ENCODE measurements at regions of chr15 and their contacts with region 1.

Region 1: GRCh38 chr15:89017370-89018066 is 70.7 kb upstream of the ABHD2 start:
- DNase-seq: peak; percentile 60 to 86 (median 64)
- ATAC-seq: peak; percentile 83
- H3K4me3 ChIP-seq: peak overlapping the region in 1 of 2 donors; percentile 12
- H3K27ac ChIP-seq: no peak overlapping the region
- H3K4me1 ChIP-seq: peaks cover 6 to 13% of the 10 kb centered on the region in 2 donors
- H3K27me3 ChIP-seq: peaks cover 0 to 30% of the 10 kb centered on the region in 2 donors
- CTCF ChIP-seq: peak; percentile 63 to 69

Region 2: GRCh38 chr15:88904624-88905327 is 112.7 kb before region 1 on chr15:
- intact Hi-C with region 1: loop called in 1 of 2 experiments (anchors 10 kb)
- DNase-seq: peak in 3 of 4 donors; percentile 76 to 90 (median 82)
- ATAC-seq: peak; percentile 96
- H3K4me3 ChIP-seq: no peak overlapping the region
- H3K27ac ChIP-seq: no peak overlapping the region
- H3K4me1 ChIP-seq: peaks cover 0 to 10% of the 10 kb centered on the region in 2 donors
- H3K27me3 ChIP-seq: no peaks in the 10 kb centered on the region
- CTCF ChIP-seq: peak; percentile 99

Region 3: GRCh38 chr15:89150762-89151664 is 133.5 kb after region 1 on chr15:
- intact Hi-C with region 1: no loop called
- DNase-seq: peak in 2 of 4 donors; percentile 50 to 51
- ATAC-seq: peak; percentile 91
- H3K4me3 ChIP-seq: no peak overlapping the region
- H3K27ac ChIP-seq: peak overlapping the region; percentile 47 to 77
- H3K4me1 ChIP-seq: peaks cover 3 to 12% of the 10 kb centered on the region in 2 donors
- H3K27me3 ChIP-seq: no peaks in the 10 kb centered on the region
- CTCF ChIP-seq: no peak

Measured in left lung (tissue), 14 donors.